ENCODE measurements at regions of chr9 and their contacts with region 1.

Region 1: DNA sequence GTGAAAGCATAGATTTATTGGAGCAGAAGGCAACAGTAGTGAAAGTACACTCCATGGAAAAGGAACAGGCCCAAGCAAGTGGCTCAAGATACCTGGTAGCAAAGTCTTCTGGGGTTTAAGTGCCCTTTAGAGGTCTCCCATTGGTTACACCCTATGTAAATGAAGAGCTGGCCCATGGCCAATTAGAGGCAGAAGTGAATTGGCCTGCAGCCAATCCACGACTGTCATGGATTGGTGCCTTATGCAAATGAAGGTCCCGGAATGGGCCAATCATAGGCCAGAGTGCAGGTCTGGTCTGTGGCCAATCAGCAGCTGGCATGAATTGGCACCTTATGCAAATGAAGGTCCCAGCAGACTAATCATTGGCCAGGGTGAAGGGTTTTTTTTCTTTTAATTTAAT is 64.2 kb upstream of the PCSK5 start:
- DNase-seq: no peak
- ATAC-seq: no peak
- H3K4me3 ChIP-seq: no peak overlapping the region
- H3K27ac ChIP-seq: no peak overlapping the region
- H3K4me1 ChIP-seq: no peaks in the 10 kb centered on the region
- H3K27me3 ChIP-seq: no peaks in the 10 kb centered on the region
- CTCF ChIP-seq: no peak
- EP300 ChIP-seq: no peak
- POLR2A ChIP-seq: no peak
- RAD21 ChIP-seq: no peak

Region 2: DNA sequence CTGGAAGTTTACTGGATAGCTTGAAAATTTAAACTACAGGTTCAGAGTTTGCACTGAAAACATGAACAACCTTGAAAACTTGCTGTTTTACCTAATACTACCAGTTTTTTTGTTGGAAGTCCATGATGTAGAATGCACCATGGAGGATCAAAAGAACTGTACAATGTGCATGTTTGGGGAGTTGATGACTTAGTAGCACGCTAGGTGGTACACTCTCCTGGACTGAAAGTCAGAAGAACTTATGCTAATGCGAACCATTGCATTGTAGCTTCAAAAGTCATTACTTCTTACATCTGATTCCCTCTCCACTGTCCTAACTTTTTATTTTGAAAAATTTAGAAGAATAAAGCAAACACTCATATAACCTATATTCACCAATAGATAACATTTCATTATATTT is 527.0 kb before region 1 on chr9:
- CTCF ChIA-PET with region 1: no interaction called
- POLR2A ChIA-PET with region 1: no interaction called
- in situ Hi-C with region 1: loop called (anchors 25 kb)
- intact Hi-C with region 1: no loop called
- DNase-seq: peak; percentile 32
- ATAC-seq: peak; percentile 92
- H3K4me3 ChIP-seq: no peak overlapping the region
- H3K27ac ChIP-seq: no peak overlapping the region
- H3K4me1 ChIP-seq: no peaks in the 10 kb centered on the region
- H3K27me3 ChIP-seq: no peaks in the 10 kb centered on the region
- CTCF ChIP-seq: peak; percentile 51
- EP300 ChIP-seq: no peak
- POLR2A ChIP-seq: no peak
- RAD21 ChIP-seq: no peak

Measured in HepG2 (cell line).